H1 (cell line): ENCODE measurements at regions of chr1 and their contacts with region 1.

Region 1: GRCh38 chr1:22861764-22862440 is 110.8 kb downstream of the LACTBL1 start:
- DNase-seq: peak in 1 of 2 experiments; percentile 78
- H3K4me3 ChIP-seq: no peak overlapping the region
- H3K27ac ChIP-seq: no peak overlapping the region
- H3K4me1 ChIP-seq: peaks cover 0 to 3% (median 0%) of the 10 kb centered on the region in 4 experiments; a peak in 3 of 7 replicates
- H3K27me3 ChIP-seq: no peaks in the 10 kb centered on the region; a peak in 1 of 7 replicates
- CTCF ChIP-seq: peak; percentile 71 to 80 (median 80)
- EP300 ChIP-seq: no peak
- POLR2A ChIP-seq: no peak
- RAD21 ChIP-seq: peak; percentile 79 to 88

Region 2: DNA sequence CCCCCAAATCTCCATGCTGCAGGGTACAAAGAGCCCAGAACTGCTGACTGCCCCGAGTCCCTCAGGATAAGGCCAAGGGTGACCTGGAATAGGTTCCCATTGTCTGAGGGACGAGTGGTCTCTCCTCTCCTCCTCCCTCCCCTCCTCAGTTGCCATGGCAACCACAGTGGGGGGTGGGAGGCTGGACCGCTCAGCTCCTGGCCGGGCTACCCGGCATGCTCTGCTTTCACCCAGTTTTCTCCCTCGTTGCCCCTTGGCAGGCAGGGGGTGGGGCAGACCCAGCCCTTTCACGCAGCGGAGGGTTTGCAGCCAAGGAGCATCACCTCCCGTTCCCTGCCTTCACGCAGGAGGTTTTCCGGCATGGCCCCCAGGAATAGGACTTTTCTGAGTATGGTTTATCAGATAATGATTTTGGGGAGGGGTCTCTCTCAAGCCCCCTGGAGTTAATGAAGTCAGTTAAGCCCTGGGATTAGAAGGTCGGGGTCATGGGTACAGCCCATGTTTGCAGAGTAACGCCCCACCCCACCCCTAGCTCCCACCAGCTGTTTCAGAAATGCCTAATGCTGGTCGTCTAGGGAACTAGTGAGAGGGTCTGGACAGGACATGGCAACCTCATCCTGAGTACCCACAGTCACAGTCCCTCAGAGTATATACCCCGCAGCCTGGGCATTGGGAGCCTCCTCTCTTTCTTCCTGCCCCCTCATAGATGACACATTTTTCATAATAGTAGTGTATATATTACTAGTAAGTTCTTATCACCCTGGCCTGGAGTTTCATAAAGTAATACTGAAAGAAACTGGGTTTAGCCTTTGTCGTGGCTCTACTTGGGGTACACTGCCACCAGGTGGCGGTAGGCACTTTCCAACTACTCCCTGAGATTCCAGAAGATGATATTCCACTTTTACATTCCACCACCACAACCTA is 188.2 kb before region 1 on chr1:
- CTCF ChIA-PET with region 1: interaction called, 30 read pairs
- POLR2A ChIA-PET with region 1: no interaction called
- DNase-seq: peak in 1 of 2 experiments; percentile 84
- H3K4me3 ChIP-seq: peak overlapping the region in 1 of 4 experiments; percentile 10; a peak in 1 of 8 replicates
- H3K27ac ChIP-seq: no peak overlapping the region
- H3K4me1 ChIP-seq: peaks cover 0 to 10% (median 5%) of the 10 kb centered on the region in 4 experiments; a peak in 4 of 7 replicates
- H3K27me3 ChIP-seq: no peaks in the 10 kb centered on the region; a peak in 1 of 7 replicates
- CTCF ChIP-seq: peak; percentile 59 to 76 (median 73)
- EP300 ChIP-seq: no peak
- POLR2A ChIP-seq: no peak
- RAD21 ChIP-seq: peak; percentile 81

Region 3: GRCh38 chr1:22722901-22723550 is 138.9 kb before region 1 on chr1:
- CTCF ChIA-PET with region 1: interaction called, 16 read pairs
- POLR2A ChIA-PET with region 1: no interaction called
- DNase-seq: no peak
- H3K4me3 ChIP-seq: no peak overlapping the region
- H3K27ac ChIP-seq: no peak overlapping the region
- H3K4me1 ChIP-seq: no peaks in the 10 kb centered on the region
- H3K27me3 ChIP-seq: no peaks in the 10 kb centered on the region
- CTCF ChIP-seq: no peak
- EP300 ChIP-seq: no peak
- POLR2A ChIP-seq: no peak
- RAD21 ChIP-seq: no peak

Region 4: GRCh38 chr1:22767852-22768251 is 94.0 kb before region 1 on chr1:
- CTCF ChIA-PET with region 1: interaction called, 10 read pairs
- POLR2A ChIA-PET with region 1: no interaction called
- DNase-seq: no peak
- H3K4me3 ChIP-seq: no peak overlapping the region
- H3K27ac ChIP-seq: no peak overlapping the region
- H3K4me1 ChIP-seq: peaks cover 0 to 2% (median 0%) of the 10 kb centered on the region in 4 experiments; a peak in 1 of 7 replicates
- H3K27me3 ChIP-seq: no peaks in the 10 kb centered on the region; a peak in 1 of 7 replicates
- CTCF ChIP-seq: no peak
- EP300 ChIP-seq: no peak
- POLR2A ChIP-seq: no peak
- RAD21 ChIP-seq: no peak

Region 5: GRCh38 chr1:22801761-22802160 is 60.1 kb before region 1 on chr1:
- CTCF ChIA-PET with region 1: interaction called, 20 read pairs
- POLR2A ChIA-PET with region 1: no interaction called
- DNase-seq: peak in 1 of 2 experiments; percentile 65
- H3K4me3 ChIP-seq: no peak overlapping the region
- H3K27ac ChIP-seq: no peak overlapping the region
- H3K4me1 ChIP-seq: peaks cover 9 to 45% (median 22%) of the 10 kb centered on the region in 4 experiments
- H3K27me3 ChIP-seq: no peaks in the 10 kb centered on the region
- CTCF ChIP-seq: no peak
- EP300 ChIP-seq: no peak
- POLR2A ChIP-seq: no peak
- RAD21 ChIP-seq: no peak

Region 6: GRCh38 chr1:22835636-22836319 is 26.1 kb before region 1 on chr1:
- CTCF ChIA-PET with region 1: interaction called, 12 read pairs
- POLR2A ChIA-PET with region 1: no interaction called
- DNase-seq: no peak
- H3K4me3 ChIP-seq: no peak overlapping the region
- H3K27ac ChIP-seq: no peak overlapping the region
- H3K4me1 ChIP-seq: no peaks in the 10 kb centered on the region
- H3K27me3 ChIP-seq: no peaks in the 10 kb centered on the region
- CTCF ChIP-seq: no peak
- EP300 ChIP-seq: no peak
- POLR2A ChIP-seq: no peak
- RAD21 ChIP-seq: no peak

Region 7: DNA sequence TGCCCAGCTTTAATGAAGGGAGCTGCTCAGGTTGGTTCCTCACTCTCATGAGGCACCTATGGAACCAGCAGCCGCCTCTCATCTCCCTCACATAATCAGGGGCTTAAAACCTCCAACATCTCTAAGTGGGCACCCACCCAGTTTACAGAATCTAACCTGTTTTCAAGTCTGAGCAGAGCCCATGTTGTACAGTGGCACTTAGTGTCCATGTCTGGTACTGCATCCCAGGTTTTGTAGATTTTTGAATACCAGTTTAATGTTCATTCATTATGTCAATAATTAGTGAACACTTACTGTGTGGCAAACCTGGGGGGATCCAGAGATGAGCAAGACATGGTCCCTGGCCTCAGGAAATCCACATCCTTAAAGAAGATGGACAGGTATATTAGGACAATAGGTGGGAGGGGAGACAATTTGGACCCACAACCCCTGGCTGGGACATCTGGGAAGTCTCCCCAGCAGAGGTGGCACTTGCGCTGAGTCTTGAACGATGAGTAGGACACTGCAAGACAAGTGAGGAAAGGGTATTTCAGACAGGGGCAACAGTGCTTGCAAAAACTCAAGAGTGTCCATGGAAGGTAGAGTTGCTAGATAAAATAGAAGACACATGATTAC is 27.4 kb after region 1 on chr1:
- CTCF ChIA-PET with region 1: interaction called, 25 read pairs
- POLR2A ChIA-PET with region 1: no interaction called
- DNase-seq: no peak
- H3K4me3 ChIP-seq: no peak overlapping the region
- H3K27ac ChIP-seq: no peak overlapping the region
- H3K4me1 ChIP-seq: no peaks in the 10 kb centered on the region
- H3K27me3 ChIP-seq: no peaks in the 10 kb centered on the region
- CTCF ChIP-seq: peak in 2 of 3 experiments; percentile 32 to 62; a peak in 3 of 4 replicates
- EP300 ChIP-seq: no peak
- POLR2A ChIP-seq: no peak
- RAD21 ChIP-seq: peak; percentile 61 to 64

Region 8: DNA sequence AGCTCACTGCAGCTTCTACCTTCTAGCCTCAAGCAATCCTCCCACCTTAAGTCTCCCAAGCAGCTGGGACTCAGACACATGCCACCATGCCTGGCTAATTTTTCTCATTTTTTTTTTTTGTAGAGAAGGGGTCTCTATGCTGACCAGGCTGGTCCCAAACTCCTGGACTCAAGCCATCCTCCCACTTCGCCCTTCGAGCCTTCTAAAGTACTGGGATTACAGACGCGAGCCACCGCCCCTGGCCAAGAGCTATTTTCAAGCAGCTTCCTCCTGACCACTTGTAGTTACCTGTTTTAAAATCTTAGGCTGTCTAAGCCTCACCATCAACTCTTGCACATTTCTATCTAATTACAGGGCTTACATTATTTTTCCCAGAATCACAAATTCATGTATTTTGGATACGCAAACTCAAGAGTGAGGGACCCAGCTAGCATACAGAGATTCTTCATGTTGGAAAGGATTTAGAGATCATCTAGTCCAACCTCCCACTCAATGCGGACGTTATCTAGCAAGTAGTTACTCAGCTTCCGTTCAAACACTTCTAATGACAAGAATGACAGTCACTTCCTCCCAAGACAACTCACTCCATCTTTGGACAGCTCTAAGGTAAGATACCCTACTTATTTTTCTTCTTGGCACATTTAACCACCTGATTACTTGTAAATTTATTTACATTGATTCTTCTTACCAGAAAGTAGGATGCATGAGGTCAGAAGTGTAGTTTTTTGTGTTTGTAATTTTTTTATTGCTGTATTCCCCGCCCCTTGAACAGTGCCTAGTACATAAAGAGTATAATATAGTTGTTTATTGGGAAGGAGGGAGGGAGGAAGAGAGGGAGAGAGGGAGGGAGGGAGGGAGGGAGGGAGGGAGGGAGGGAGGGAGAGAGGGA is 241.3 kb after region 1 on chr1:
- CTCF ChIA-PET with region 1: no interaction called
- POLR2A ChIA-PET with region 1: no interaction called
- DNase-seq: no peak
- H3K4me3 ChIP-seq: no peak overlapping the region
- H3K27ac ChIP-seq: no peak overlapping the region
- H3K4me1 ChIP-seq: peaks cover 0 to 5% (median 1%) of the 10 kb centered on the region in 4 experiments; a peak in 2 of 7 replicates
- H3K27me3 ChIP-seq: no peaks in the 10 kb centered on the region
- CTCF ChIP-seq: no peak
- EP300 ChIP-seq: no peak
- POLR2A ChIP-seq: no peak
- RAD21 ChIP-seq: no peak